A673 (cell line): ENCODE measurements at regions of chr11 and their contacts with region 1.

Region 1: GRCh38 chr11:134863294-134863693 is 451.3 kb upstream of the B3GAT1 start:
- DNase-seq: no peak
- H3K4me3 ChIP-seq: no peak overlapping the region
- H3K27ac ChIP-seq: no peak overlapping the region
- H3K4me1 ChIP-seq: no peaks in the 10 kb centered on the region
- H3K27me3 ChIP-seq: no peaks in the 10 kb centered on the region
- CTCF ChIP-seq: no peak

Region 2: GRCh38 chr11:134360050-134360835 is 503.1 kb before region 1 on chr11:
- CTCF ChIA-PET with region 1: no interaction called
- POLR2A ChIA-PET with region 1: no interaction called
- intact Hi-C with region 1: loop called (anchors 2 kb)
- DNase-seq: peak; percentile 90
- H3K4me3 ChIP-seq: no peak overlapping the region
- H3K27ac ChIP-seq: no peak overlapping the region
- H3K4me1 ChIP-seq: no peaks in the 10 kb centered on the region
- H3K27me3 ChIP-seq: no peaks in the 10 kb centered on the region
- CTCF ChIP-seq: peak; percentile 97

Region 3: GRCh38 chr11:134939905-134940304 is 76.6 kb after region 1 on chr11:
- CTCF ChIA-PET with region 1: no interaction called
- POLR2A ChIA-PET with region 1: no interaction called
- intact Hi-C with region 1: loop called (anchors 1 kb)
- DNase-seq: peak; percentile 56
- H3K4me3 ChIP-seq: no peak overlapping the region
- H3K27ac ChIP-seq: no peak overlapping the region
- H3K4me1 ChIP-seq: no peaks in the 10 kb centered on the region
- H3K27me3 ChIP-seq: no peaks in the 10 kb centered on the region
- CTCF ChIP-seq: peak; percentile 49

Region 4: GRCh38 chr11:135033540-135033939 is 170.2 kb after region 1 on chr11:
- CTCF ChIA-PET with region 1: no interaction called
- POLR2A ChIA-PET with region 1: no interaction called
- intact Hi-C with region 1: loop called (anchors 1 kb)
- DNase-seq: peak; percentile 65
- H3K4me3 ChIP-seq: no peak overlapping the region
- H3K27ac ChIP-seq: no peak overlapping the region
- H3K4me1 ChIP-seq: peaks cover 6% of the 10 kb centered on the region
- H3K27me3 ChIP-seq: no peaks in the 10 kb centered on the region
- CTCF ChIP-seq: peak; percentile 53